ENCODE measurements at regions of chr2 and their contacts with region 1.

Region 1: GRCh38 chr2:30231212-30231995 is at the start of gene LBH:
- DNase-seq: peak; percentile 70 to 88
- H3K4me3 ChIP-seq: peak within 1 kb of the TSS; percentile 61 to 77 (median 76)
- H3K27ac ChIP-seq: peak within 1 kb of the TSS; percentile 91 to 97
- H3K4me1 ChIP-seq: peaks cover 0 to 5% of the 10 kb centered on the region in 2 donors
- H3K27me3 ChIP-seq: peaks cover 0 to 3% of the 10 kb centered on the region in 2 donors
- CTCF ChIP-seq: no peak
- POLR2A ChIP-seq: peak; percentile 96
- total RNA-seq, gene LBH: 18.2 to 153 (median 87.2) TPM

Region 2: DNA sequence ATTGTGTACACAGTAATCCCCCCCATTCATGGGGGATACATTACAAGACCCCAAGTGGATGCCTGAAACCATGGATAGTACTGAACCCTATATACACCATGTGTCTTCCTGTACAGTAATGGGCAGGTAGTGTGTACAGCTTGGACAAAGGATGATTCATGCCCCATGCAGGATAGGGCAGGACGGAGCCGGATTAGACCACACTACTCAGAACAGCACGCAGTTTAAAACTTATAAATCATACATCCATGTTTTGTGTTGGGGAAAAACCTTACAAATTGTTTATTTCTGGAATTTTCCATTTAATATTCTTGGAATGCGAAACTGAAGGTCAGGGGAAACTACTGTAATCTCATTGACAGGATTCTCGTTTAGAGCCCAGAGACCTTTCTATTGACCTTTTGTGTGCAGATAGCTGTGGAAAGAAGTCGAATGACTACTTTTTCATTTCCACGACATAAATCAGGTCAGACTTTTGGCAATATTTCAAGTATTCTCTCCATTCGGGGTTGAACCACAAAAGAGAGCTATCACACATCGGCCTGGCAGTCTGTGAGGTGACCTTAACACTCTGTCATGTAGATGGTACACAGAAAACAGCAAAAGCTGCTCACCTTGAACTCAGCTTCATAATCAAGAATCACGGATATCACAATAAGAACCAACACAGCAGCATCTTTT is 94.5 kb before region 1 on chr2:
- intact Hi-C with region 1: no loop called
- DNase-seq: no peak
- H3K4me3 ChIP-seq: no peak overlapping the region
- H3K27ac ChIP-seq: no peak overlapping the region
- H3K4me1 ChIP-seq: no peaks in the 10 kb centered on the region
- H3K27me3 ChIP-seq: no peaks in the 10 kb centered on the region
- CTCF ChIP-seq: no peak
- POLR2A ChIP-seq: no peak

Region 3: DNA sequence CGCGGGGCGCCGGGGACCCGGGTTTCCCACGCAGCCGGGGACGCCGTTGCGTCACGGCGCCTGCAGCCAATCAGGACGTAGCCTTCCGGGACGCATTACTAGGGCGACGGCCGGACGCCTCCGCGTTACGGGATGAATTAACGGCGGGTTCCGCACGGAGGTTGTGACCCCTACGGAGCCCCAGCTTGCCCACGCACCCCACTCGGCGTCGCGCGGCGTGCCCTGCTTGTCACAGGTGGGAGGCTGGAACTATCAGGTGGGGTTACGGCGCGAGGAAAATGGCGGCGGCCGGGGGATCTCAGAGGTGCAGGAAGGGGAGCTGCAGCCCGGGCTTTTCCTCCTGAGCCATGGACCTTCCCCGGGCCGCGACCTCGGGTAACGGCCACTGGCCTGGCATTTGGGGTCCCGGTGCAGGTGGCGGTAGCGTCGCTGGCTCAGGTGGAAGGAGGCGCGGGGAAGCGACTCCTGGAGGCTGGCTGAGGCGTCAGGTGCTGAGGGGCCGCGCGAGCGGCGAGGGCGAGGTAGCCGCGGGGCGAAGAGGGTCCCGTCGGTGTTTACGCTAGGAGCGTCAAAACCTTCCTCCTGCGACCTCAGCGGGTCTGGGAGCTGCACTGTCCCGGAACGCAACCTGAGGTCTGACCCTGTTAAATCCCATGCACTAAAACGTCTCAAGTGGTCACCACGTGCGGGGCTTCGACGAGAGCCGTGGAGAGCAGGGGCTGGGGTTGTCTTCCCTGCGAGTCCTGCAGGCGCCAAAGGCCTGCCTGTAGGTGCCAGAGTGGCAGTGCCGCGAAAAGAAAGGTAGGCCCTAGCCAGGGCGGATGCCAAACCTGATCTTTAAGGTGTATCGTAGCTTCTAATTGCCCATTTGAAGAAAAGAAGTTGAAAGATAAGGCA is 216.0 kb after region 1 on chr2 and contains the start of gene LCLAT1:
- intact Hi-C with region 1: loop called (anchors 10 kb)
- DNase-seq: peak; percentile 64 to 66
- H3K4me3 ChIP-seq: peak within 1 kb of the TSS; percentile 81 to 93 (median 87)
- H3K27ac ChIP-seq: peak within 1 kb of the TSS; percentile 61 to 82
- H3K4me1 ChIP-seq: no peaks in the 10 kb centered on the region
- H3K27me3 ChIP-seq: no peaks in the 10 kb centered on the region
- CTCF ChIP-seq: no peak
- POLR2A ChIP-seq: no peak
- total RNA-seq, gene LCLAT1: 8.0 to 20.6 (median 19.7) TPM

Region 4: DNA sequence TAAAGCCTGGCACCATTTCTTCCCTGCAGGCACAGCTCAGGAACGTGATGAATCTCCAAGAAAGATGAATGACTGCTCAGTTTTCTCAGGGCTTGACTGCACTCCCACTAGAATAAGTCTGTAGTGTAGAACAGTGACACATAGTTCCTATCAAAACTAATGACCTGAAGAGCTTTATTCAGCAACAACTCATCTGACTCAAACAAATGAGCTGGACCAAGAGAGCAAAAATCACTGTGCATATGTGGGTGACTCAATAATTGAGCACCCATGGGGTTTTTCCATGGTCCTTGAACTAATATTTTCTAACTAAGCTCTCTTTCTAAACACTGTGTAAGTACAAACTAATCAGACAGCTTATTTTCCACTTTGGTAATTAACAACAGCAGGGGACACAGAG is 1244.3 kb after region 1 on chr2:
- intact Hi-C with region 1: loop called (anchors 5 kb)
- DNase-seq: no peak
- H3K4me3 ChIP-seq: no peak overlapping the region
- H3K27ac ChIP-seq: no peak overlapping the region
- H3K4me1 ChIP-seq: no peaks in the 10 kb centered on the region
- H3K27me3 ChIP-seq: no peaks in the 10 kb centered on the region
- CTCF ChIP-seq: no peak
- POLR2A ChIP-seq: no peak

Measured in breast epithelium (tissue), 4 donors.